A549 (cell line): ENCODE measurements at regions of chr16 and their contacts with region 1.

Region 1: GRCh38 chr16:67279296-67280089 is at the start of gene PLEKHG4:
- DNase-seq: peak; percentile 86 to 93
- ATAC-seq: peak; percentile 86 to 91
- H3K4me3 ChIP-seq: peak within 1 kb of the TSS; percentile 80
- H3K27ac ChIP-seq: peak within 1 kb of the TSS; percentile 96 to 98
- H3K4me1 ChIP-seq: peaks cover 35% of the 10 kb centered on the region
- CTCF ChIP-seq: peak; percentile 78
- EP300 ChIP-seq: no peak
- POLR2A ChIP-seq: peak; percentile 65
- RAD21 ChIP-seq: peak; percentile 33 to 60; a peak in 4 of 5 replicates
- polyA plus RNA-seq, gene PLEKHG4: 10.0 and 17.7 TPM in 2 replicates

Region 2: DNA sequence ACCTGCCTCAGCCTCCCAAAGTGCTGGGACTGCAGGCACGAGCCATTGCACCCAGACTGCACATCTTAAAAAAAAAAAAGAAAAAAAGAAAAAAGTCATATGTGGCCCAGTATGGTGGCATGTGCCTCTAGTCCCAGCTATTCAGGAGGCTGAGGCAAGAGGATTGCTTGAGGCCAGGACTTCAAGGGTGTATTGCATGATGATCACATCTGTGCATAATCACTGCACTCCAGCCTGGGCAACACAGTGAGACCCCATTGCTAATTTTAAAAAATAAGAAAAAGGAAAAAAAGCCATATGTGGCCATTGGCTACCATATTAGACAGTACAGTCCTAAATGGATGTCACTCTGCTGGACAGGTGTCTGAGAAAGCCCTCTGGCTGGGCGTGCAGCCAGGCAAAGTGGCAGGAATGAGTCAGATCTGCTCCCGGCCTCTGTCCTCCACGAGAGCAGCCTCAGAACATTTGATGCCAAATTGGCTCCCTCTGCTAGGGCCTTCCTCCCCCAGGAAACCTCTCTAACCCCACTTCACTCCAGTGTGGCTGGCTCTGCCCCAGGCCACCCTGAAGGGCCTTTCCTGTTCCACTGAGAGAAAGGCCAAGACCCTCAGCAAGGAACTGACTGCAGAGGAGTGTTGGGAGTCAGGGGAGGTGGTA is 420.6 kb before region 1 on chr16:
- CTCF ChIA-PET with region 1: no interaction called
- POLR2A ChIA-PET with region 1: no interaction called
- DNase-seq: peak in 1 of 2 experiments; percentile 47
- ATAC-seq: peak; percentile 70 to 78
- H3K4me3 ChIP-seq: no peak overlapping the region
- H3K27ac ChIP-seq: peak overlapping the region in 1 of 2 experiments; percentile 25; a peak in 1 of 6 replicates
- H3K4me1 ChIP-seq: peaks cover 9% of the 10 kb centered on the region; the same call in 1 of the 3 replicates
- CTCF ChIP-seq: no peak
- EP300 ChIP-seq: no peak
- POLR2A ChIP-seq: no peak
- RAD21 ChIP-seq: no peak

Region 3: DNA sequence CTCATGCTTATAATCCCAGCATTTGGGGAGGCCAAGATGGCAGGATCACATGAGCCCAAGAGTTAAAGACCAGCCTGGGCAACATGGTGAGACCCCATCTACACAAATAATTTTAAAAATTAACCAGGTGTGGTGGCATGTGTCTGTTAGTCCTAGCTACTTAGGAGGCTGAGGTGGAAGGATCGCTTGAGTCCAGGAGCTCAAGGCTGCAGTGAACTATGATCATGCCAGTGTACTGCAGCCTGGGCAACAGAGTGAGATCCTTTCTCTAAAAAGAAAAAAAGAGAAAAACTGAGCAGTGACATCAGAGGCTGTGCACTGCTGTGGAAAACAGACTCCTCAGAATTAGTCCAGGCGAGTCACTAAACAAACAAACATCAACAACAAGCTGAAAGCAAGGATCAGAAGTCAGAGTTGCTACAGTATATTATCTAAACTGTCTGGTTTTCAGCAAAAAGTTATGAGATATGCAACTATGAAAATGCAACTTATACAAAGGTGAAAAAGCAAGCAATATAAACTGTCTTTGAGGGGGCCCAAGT is 211.2 kb before region 1 on chr16:
- CTCF ChIA-PET with region 1: no interaction called
- POLR2A ChIA-PET with region 1: no interaction called
- DNase-seq: peak in 1 of 2 experiments; percentile 10
- ATAC-seq: peak in 1 of 2 experiments; percentile 35; a peak in 1 of 6 replicates
- H3K4me3 ChIP-seq: no peak overlapping the region
- H3K27ac ChIP-seq: no peak overlapping the region
- H3K4me1 ChIP-seq: 0 out of 3 replicates have a peak, but pooled peaks cover 9% of the 10 kb centered on the region
- CTCF ChIP-seq: no peak
- EP300 ChIP-seq: no peak
- POLR2A ChIP-seq: no peak
- RAD21 ChIP-seq: no peak

Region 4: DNA sequence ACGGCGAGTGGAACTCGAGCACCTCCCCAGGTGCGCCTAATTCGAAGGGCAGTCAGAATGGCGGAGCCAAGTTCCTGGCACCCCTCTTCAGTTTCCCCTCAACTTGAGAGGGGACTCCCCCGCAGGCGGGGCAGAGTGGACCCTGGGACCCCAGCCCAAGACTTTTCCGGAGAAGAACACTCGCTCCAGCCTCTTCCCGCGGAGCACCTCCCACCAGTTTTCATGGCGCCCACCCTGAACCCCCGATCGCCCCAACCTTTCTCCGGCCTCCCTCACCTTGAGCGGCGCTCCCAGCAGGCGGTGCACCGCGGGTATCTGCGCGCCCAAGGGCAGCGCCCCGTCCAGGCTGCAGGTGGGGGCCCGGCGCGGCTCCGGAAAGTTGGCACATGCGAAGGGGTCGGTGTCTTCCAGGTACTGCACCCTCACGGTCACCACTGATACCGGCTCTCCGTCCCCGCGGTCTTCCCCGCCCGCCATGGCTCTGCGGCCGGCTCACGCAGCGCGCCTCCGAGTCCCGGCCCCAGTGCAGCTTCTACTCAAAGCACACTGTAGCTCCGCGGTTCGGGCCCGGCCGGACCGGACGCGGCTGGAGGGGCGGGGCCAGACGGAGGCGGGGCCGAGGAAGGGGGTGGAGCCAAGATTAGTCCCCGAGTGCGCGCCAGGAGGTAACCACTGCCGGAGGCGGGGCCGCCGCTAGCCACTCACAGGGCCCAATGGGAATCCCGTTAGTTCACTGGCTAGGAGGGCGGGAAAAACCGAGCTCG is 32.4 kb before region 1 on chr16 and contains the start of gene FHOD1:
- CTCF ChIA-PET with region 1: interaction called, 20 read pairs
- POLR2A ChIA-PET with region 1: interaction called, 3 read pairs
- DNase-seq: peak; percentile 82 to 95
- ATAC-seq: peak; percentile 38 to 79
- H3K4me3 ChIP-seq: peak within 1 kb of the TSS; percentile 74
- H3K27ac ChIP-seq: peak within 1 kb of the TSS; percentile 91 to 98
- H3K4me1 ChIP-seq: peaks cover 52% of the 10 kb centered on the region
- CTCF ChIP-seq: no peak
- EP300 ChIP-seq: no peak
- POLR2A ChIP-seq: peak; percentile 59
- RAD21 ChIP-seq: no peak
- polyA plus RNA-seq, gene FHOD1: 16.1 and 18.1 TPM in 2 replicates

Region 5: DNA sequence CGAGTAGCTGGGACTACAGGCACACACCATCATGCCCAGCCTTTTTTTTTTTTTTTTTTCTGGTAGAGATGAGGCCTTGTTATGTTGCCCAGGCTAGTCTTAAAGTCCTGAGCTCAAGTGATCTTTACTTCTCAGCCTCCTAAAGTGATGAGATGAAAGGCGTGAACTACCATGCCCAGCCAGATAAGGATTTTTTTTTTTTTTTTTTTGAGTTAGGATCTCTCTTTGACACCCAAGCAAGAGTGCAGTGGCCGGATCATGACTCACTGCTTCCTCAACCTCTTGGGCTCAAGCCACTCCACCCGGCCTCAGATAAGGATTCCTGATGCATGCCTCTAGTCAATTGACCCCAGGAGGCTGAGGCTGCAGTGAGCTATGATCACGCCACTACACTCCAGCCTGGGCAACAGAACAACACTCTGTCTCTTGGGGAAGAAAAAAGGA is 11.3 kb before region 1 on chr16:
- CTCF ChIA-PET with region 1: interaction called, 26 read pairs
- POLR2A ChIA-PET with region 1: interaction called, 5 read pairs
- DNase-seq: peak in 1 of 2 experiments; percentile 61
- ATAC-seq: peak; percentile 54 to 66; a peak in 3 of 6 replicates
- H3K4me3 ChIP-seq: no peak overlapping the region
- H3K27ac ChIP-seq: 0 out of 6 replicates have a peak overlapping the region, but pooled peaks of 1 of the 2 experiments have one; percentile 29
- H3K4me1 ChIP-seq: peaks cover 12% of the 10 kb centered on the region
- CTCF ChIP-seq: no peak
- EP300 ChIP-seq: no peak
- POLR2A ChIP-seq: no peak
- RAD21 ChIP-seq: no peak